PC-9 (cell line): ENCODE measurements at regions of chr2 and their contacts with region 1.

Region 1: DNA sequence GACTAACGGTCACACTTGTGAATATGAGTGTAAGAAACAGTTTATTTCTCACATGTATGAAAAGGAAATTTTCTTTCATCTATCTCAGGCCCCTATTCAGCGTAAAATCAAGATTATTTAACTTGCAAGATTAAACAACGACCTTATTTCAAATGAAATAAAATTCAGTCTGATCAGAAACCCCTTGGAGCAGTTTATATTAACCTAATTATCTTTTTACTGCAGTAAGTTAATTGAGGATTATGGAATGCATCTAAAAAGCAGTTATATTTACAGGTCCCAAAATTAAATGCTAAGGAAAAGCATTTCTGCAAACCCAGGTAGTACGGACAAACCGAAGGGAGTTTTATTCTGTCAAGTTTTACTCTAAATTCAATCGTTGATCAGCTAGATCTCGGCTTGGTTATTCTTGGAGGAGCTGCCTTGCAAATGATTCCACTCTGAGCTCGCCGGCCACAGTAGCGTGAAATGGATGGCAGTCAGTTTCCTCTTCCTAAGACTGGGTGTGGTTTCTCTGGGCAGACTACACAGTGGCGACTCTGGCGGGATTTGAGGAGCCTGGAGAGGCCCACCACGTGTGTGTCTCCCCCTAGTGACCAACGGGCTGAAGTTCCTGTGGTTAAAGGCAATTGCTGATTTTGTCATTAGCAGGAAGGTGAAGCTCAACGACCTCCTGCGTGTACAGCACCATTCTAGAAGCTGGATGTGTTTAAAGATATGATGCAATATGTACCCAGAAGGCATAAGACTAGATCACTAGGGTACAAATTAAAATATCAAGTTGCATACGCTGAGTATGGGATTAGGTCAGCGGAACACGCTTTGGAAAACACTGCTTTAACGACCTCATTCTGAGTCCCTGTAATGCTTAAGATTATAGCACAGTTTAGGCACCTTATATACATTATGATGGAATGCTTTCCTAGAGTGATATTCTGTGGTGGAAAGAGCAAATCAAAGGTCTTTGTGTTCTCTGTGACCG is 36.4 kb downstream of the PRKRA start:
- DNase-seq: peak; percentile 91 to 93
- H3K4me3 ChIP-seq: peak overlapping the region; percentile 72
- H3K27ac ChIP-seq: peak overlapping the region; percentile 55; the same call in 1 of the 2 replicates
- H3K4me1 ChIP-seq: peaks cover 18% of the 10 kb centered on the region
- H3K27me3 ChIP-seq: no peaks in the 10 kb centered on the region
- CTCF ChIP-seq: peak; percentile 99

Region 2: GRCh38 chr2:177772529-177772928 is 642.0 kb before region 1 on chr2:
- CTCF ChIA-PET with region 1: interaction called, 5 read pairs
- POLR2A ChIA-PET with region 1: no interaction called
- intact Hi-C with region 1: loop called (anchors 2 kb)
- DNase-seq: no peak
- H3K4me3 ChIP-seq: no peak overlapping the region
- H3K27ac ChIP-seq: no peak overlapping the region
- H3K4me1 ChIP-seq: no peaks in the 10 kb centered on the region
- H3K27me3 ChIP-seq: no peaks in the 10 kb centered on the region
- CTCF ChIP-seq: peak; percentile 85

Region 3: GRCh38 chr2:177906041-177906718 is 508.4 kb before region 1 on chr2:
- CTCF ChIA-PET with region 1: no interaction called
- POLR2A ChIA-PET with region 1: no interaction called
- intact Hi-C with region 1: loop called (anchors 2 kb)
- DNase-seq: peak in 1 of 2 experiments; percentile 73
- H3K4me3 ChIP-seq: no peak overlapping the region
- H3K27ac ChIP-seq: no peak overlapping the region
- H3K4me1 ChIP-seq: no peaks in the 10 kb centered on the region; the same call in 1 of the 2 replicates
- H3K27me3 ChIP-seq: no peaks in the 10 kb centered on the region
- CTCF ChIP-seq: peak; percentile 95

Region 4: DNA sequence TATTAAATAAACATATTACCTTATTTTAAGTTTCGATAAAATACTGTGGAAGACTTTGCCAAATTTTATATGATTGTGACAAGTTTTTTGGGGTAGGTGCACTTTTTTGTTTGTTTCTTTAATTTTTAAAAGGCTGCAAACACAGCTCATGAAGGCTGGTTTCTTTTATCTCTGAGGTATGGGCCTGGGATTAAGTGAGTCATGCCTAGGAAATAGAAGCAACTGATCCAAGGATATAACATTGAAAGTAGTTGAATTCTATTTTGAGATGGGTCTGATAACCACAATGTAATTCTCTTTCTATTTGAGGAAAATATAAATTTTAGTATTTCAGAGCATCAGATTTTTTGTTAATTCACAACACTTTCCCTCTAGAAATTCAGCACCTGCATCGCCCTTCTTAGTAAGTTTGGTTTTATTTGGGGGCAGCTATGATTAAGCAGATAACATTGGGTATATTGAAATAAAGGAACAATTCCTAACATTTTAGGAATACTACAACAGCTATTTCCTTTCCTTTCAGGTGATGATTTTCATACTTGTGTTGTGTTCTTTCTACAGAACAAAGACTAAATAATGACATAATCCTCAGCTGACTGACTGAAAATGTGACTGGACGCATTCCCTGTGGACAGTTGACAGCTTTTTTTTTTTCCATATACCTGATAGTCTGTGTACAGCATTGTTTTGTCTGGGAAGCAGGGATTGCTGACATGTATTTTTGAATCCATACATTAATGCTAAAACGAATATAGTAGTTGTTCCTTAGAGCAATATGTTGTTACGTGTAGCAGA is 285.5 kb before region 1 on chr2:
- CTCF ChIA-PET with region 1: interaction called, 5 read pairs
- POLR2A ChIA-PET with region 1: no interaction called
- intact Hi-C with region 1: loop called (anchors 1 kb)
- DNase-seq: no peak
- H3K4me3 ChIP-seq: no peak overlapping the region
- H3K27ac ChIP-seq: no peak overlapping the region
- H3K4me1 ChIP-seq: peaks cover 13% of the 10 kb centered on the region
- H3K27me3 ChIP-seq: no peaks in the 10 kb centered on the region
- CTCF ChIP-seq: no peak

Region 5: DNA sequence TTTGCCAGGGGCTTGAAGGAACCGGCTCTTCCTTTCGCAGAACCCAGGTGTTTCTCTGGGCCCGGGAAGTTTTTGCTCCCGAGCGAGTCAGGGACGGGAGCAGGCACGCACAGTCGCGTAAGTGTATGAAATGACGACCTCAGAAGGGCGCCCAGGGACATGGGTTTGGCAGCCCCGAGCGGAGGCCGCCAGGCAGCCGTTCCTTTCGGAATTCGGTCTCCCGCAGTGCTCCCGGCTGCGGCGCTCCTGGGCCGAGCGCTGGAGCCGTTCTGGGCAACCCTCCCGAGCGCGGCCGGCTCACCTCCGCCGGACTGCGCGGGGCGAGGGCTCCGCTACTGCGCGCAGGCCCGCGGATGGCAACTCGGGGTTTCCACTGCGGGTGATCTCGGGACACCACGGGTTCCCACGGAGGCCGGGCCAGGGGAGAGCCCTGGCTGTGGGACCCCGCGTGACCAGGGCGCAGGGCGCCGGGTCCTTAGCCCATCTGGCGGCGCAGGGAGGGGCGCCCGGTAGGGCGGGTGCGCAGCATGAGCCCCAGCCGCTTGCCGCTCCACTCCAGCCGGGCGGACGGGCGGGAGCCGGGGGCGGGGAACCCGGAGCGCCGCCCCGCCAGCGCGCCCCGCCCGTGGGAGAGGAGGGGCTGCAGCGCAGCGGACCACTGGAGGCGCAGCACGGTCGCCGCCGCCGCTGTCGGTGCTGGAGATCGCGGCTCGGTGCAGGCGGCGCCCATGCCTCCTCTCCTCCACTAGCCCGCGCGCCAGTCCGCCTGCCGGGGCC is 220.5 kb before region 1 on chr2 and contains the start of gene OSBPL6:
- CTCF ChIA-PET with region 1: no interaction called
- POLR2A ChIA-PET with region 1: interaction called, 3 read pairs
- intact Hi-C with region 1: loop called (anchors 1 kb)
- DNase-seq: peak; percentile 63 to 93
- H3K4me3 ChIP-seq: peak within 1 kb of the TSS; percentile 93
- H3K27ac ChIP-seq: no peak within 1 kb of the TSS
- H3K4me1 ChIP-seq: peaks cover 16% of the 10 kb centered on the region
- H3K27me3 ChIP-seq: peaks cover 24% of the 10 kb centered on the region; the same call in 1 of the 2 replicates
- CTCF ChIP-seq: no peak; the same call in 1 of the 2 replicates
- total RNA-seq, gene OSBPL6: 2.6 and 3.5 TPM in 2 replicates

Region 6: GRCh38 chr2:178229927-178230326 is 184.6 kb before region 1 on chr2:
- CTCF ChIA-PET with region 1: no interaction called
- POLR2A ChIA-PET with region 1: no interaction called
- intact Hi-C with region 1: no loop called
- DNase-seq: no peak
- H3K4me3 ChIP-seq: no peak overlapping the region
- H3K27ac ChIP-seq: no peak overlapping the region
- H3K4me1 ChIP-seq: no peaks in the 10 kb centered on the region
- H3K27me3 ChIP-seq: no peaks in the 10 kb centered on the region
- CTCF ChIP-seq: no peak

Region 7: GRCh38 chr2:178397002-178397605 is 17.5 kb before region 1 on chr2:
- CTCF ChIA-PET with region 1: interaction called, 37 read pairs
- POLR2A ChIA-PET with region 1: interaction called, 4 read pairs
- intact Hi-C with region 1: loop called (anchors 2 kb)
- DNase-seq: no peak
- H3K4me3 ChIP-seq: no peak overlapping the region
- H3K27ac ChIP-seq: no peak overlapping the region
- H3K4me1 ChIP-seq: no peaks in the 10 kb centered on the region
- H3K27me3 ChIP-seq: no peaks in the 10 kb centered on the region
- CTCF ChIP-seq: peak; percentile 94